ENCODE measurements at regions of chr19 and their contacts with region 1.

Region 1: DNA sequence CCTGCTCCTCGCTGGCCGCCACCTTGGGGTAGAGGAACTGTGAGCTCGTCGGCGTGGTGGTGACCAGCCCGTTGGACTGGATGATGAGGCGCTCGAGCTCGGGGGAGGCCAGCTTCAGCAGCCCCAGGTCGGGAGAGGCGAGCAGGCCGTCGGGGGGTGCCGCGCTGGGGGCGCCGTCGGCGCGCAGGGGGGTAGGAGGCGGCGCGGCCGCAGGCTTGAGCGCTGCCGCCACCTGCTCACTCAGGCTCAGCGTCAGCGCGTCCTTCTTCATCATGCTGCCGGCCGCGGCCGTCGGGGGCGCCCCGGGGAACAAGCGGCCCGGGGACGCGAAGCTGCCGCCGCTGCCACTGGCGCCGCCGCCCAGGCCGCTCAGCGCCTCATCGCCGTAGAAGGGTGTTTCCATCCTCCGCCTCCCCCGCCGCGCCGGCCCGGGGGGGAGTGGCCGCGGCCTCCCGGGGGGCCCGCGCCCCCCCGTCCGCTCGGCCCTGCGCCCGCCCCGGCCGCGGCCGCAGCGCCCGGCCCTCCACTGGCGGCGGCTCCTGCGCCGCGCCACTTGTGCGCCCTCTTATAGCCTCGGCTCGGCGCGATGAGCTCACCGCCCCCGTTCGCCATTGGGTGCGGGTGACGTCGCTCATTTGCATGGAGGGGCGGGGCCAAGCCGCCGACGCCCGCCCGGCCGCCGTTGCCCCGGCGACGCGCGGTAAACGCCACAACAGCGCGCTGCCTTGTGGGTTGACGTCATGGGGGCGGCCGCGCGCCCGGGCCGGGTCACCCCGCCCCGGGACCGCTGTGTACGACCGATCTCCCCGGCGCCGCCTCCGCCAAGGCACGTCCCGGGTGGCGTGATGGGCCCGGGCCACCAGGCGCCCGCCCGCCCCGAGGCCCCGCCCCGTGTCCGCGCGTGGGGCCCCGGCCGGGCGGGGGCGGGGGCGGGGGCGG is at the start of gene JUND:
- DNase-seq: peak; percentile 91 to 99
- H3K4me3 ChIP-seq: peak within 1 kb of the TSS; percentile 93
- H3K27ac ChIP-seq: peak within 1 kb of the TSS; percentile 97
- H3K4me1 ChIP-seq: peaks cover 21% of the 10 kb centered on the region
- H3K27me3 ChIP-seq: no peaks in the 10 kb centered on the region
- CTCF ChIP-seq: no peak
- total RNA-seq, gene JUND: 115 and 150 TPM in 2 replicates

Region 2: GRCh38 chr19:17671906-17672305 is 609.4 kb before region 1 on chr19:
- CTCF ChIA-PET with region 1: no interaction called
- POLR2A ChIA-PET with region 1: interaction called, 24 read pairs
- intact Hi-C with region 1: no loop called
- DNase-seq: peak; percentile 37 to 52
- H3K4me3 ChIP-seq: no peak overlapping the region
- H3K27ac ChIP-seq: no peak overlapping the region
- H3K4me1 ChIP-seq: no peaks in the 10 kb centered on the region
- H3K27me3 ChIP-seq: peaks cover 5% of the 10 kb centered on the region; the same call in 1 of the 2 replicates
- CTCF ChIP-seq: no peak

Region 3: GRCh38 chr19:18291590-18292461 is 10.5 kb after region 1 on chr19:
- CTCF ChIA-PET with region 1: interaction called, 3 read pairs
- POLR2A ChIA-PET with region 1: interaction called, 36 read pairs
- intact Hi-C with region 1: loop called (anchors 1 kb)
- DNase-seq: peak; percentile 52 to 69
- H3K4me3 ChIP-seq: peak overlapping the region; percentile 62
- H3K27ac ChIP-seq: peak overlapping the region; percentile 58
- H3K4me1 ChIP-seq: peaks cover 13% of the 10 kb centered on the region
- H3K27me3 ChIP-seq: no peaks in the 10 kb centered on the region
- CTCF ChIP-seq: no peak

Region 4: GRCh38 chr19:18304458-18305310 is 23.3 kb after region 1 on chr19:
- CTCF ChIA-PET with region 1: interaction called, 17 read pairs
- POLR2A ChIA-PET with region 1: interaction called, 63 read pairs
- intact Hi-C with region 1: loop called (anchors 1 kb)
- DNase-seq: peak in 1 of 2 experiments; percentile 88
- H3K4me3 ChIP-seq: peak overlapping the region; percentile 8; the same call in 1 of the 2 replicates
- H3K27ac ChIP-seq: peak overlapping the region; percentile 48
- H3K4me1 ChIP-seq: peaks cover 42% of the 10 kb centered on the region
- H3K27me3 ChIP-seq: no peaks in the 10 kb centered on the region
- CTCF ChIP-seq: no peak

Region 5: GRCh38 chr19:18322759-18323460 is 41.6 kb after region 1 on chr19 and contains the start of gene LSM4:
- CTCF ChIA-PET with region 1: interaction called, 46 read pairs
- POLR2A ChIA-PET with region 1: interaction called, 28 read pairs
- intact Hi-C with region 1: loop called (anchors 1 kb)
- DNase-seq: peak; percentile 97 to 99
- H3K4me3 ChIP-seq: peak within 1 kb of the TSS; percentile 76
- H3K27ac ChIP-seq: peak within 1 kb of the TSS; percentile 84
- H3K4me1 ChIP-seq: peaks cover 37% of the 10 kb centered on the region
- H3K27me3 ChIP-seq: no peaks in the 10 kb centered on the region
- CTCF ChIP-seq: no peak
- total RNA-seq, gene LSM4: 291 and 323 TPM in 2 replicates

Measured in PC-9 (cell line).